ENCODE measurements at regions of chr17 and their contacts with region 1.

Region 1: DNA sequence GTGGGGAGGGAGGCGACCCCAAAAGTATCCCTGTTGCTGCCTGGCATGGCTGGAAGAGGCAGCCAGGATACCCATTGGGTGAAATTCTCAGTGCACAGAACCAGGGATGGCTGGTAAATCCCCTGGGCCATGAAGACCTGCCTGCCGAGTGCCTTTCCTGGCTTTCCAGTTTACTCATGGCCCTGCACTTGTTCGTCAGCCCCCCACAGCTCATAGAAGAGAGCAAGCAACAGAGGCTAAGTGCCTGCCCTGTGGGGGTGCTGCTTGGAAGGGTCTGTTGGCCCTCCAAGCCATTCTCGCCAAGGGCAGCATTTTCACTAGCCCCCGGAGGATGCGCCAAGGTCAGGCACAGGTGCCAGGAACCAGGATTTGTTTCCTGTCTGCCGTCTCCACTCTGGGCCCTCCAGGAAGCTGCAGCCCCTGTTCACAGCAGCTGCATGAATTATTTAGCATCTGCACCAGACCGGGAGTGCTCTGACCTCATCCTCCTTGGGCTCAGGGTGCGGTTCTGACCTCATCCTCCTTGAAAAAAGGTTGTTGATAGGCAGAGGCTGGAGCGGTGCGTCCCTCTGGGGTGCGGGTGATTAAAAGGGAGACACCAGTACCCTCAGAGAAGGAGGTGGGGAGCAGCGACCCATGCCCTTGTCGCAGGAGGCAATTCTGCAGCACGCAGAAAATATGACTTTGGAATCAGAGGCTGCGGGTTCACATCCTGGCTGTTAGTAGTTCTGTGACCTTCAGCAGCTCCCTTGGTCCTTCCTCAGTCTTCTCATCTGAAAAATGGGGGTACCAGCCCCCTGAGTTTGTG is 14.2 kb upstream of the CD300A start:
- DNase-seq: no peak
- H3K4me3 ChIP-seq: no peak overlapping the region
- H3K27ac ChIP-seq: peak overlapping the region in 3 of 4 donors; percentile 81 to 83 (median 83)
- H3K4me1 ChIP-seq: peaks cover 15 to 36% (median 29%) of the 10 kb centered on the region in 4 donors
- H3K27me3 ChIP-seq: no peaks in the 10 kb centered on the region
- CTCF ChIP-seq: no peak
- EP300 ChIP-seq: no peak
- POLR2A ChIP-seq: no peak

Region 2: DNA sequence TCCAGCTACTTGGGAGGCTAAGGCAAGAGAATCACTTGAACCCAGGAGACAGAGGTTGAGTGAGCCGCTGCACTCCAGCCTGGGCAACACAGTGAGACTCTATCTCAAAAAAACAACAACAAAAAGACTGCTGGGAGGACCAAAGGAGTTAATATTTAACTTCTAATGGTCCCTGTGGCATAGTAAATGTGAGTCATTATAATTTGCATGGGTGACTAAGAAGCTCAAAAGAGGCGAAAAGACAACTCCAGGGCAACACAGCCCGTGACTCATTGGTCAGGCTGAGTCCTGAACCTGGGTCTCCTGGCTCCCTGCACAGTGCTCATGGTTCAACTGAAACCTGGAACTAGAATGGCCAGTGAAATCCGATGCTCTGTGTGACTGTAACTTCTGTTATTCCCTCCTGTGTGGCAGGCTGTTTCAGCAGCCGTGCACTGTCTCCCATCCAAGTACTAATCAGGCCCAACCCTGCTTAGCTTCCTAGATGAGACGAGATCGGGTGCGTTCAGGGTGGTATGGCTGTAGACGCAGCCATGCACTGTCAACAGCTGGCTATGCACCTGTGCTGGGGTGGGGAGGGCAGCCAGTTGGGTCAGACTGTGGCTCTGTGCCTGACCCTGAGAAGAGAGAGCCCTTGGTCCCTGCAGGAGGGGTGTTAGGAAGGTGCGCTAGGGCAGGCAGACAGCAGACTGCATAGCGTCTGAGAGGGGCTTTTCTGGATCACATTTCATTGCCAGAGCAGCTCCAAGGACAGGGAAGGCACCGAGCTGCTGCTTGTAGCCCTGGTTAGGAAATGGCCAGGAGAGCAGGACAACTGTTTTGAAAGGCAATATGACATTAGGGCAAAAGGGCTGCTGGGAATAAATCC is 34.8 kb before region 1 on chr17:
- in situ Hi-C with region 1: no loop called
- intact Hi-C with region 1: loop called (anchors 1 kb)
- DNase-seq: peak; percentile 55
- H3K4me3 ChIP-seq: no peak overlapping the region
- H3K27ac ChIP-seq: peak overlapping the region; percentile 48 to 84 (median 78)
- H3K4me1 ChIP-seq: peaks cover 0 to 38% (median 31%) of the 10 kb centered on the region in 4 donors
- H3K27me3 ChIP-seq: no peaks in the 10 kb centered on the region
- CTCF ChIP-seq: no peak
- EP300 ChIP-seq: no peak
- POLR2A ChIP-seq: no peak

Region 3: GRCh38 chr17:74427763-74428153 is 24.5 kb before region 1 on chr17:
- in situ Hi-C with region 1: no loop called
- intact Hi-C with region 1: no loop called
- DNase-seq: no peak
- H3K4me3 ChIP-seq: no peak overlapping the region
- H3K27ac ChIP-seq: peak overlapping the region; percentile 84 to 96 (median 92)
- H3K4me1 ChIP-seq: peaks cover 18 to 53% (median 43%) of the 10 kb centered on the region in 4 donors
- H3K27me3 ChIP-seq: no peaks in the 10 kb centered on the region
- CTCF ChIP-seq: no peak
- EP300 ChIP-seq: no peak
- POLR2A ChIP-seq: no peak

Region 4: GRCh38 chr17:74521701-74522201 is 69.5 kb after region 1 on chr17:
- in situ Hi-C with region 1: no loop called
- intact Hi-C with region 1: no loop called
- DNase-seq: no peak
- H3K4me3 ChIP-seq: no peak overlapping the region
- H3K27ac ChIP-seq: peak overlapping the region; percentile 38 to 67 (median 40)
- H3K4me1 ChIP-seq: no peaks in the 10 kb centered on the region
- H3K27me3 ChIP-seq: no peaks in the 10 kb centered on the region
- CTCF ChIP-seq: no peak
- EP300 ChIP-seq: no peak
- POLR2A ChIP-seq: no peak

Region 5: DNA sequence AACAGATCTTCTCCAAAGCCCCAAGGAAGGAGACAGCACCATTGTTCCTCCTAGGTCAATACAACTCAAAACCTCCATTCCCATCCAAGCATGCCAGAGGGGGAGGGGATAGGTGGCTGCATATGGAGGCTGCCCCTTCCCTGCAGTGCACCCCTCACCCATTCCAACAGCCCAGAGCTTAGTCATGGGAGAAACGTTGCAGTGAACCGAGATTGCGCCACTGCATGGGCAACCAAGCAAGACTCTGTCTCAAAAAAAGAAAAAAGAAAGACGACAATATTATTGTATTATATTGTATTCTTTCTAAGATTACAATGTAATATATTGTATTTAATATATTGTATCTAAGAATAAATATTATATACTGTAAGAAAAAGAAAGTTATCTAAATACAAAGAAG is 207.7 kb after region 1 on chr17:
- in situ Hi-C with region 1: no loop called
- intact Hi-C with region 1: no loop called
- DNase-seq: no peak
- H3K4me3 ChIP-seq: no peak overlapping the region
- H3K27ac ChIP-seq: no peak overlapping the region
- H3K4me1 ChIP-seq: peaks cover 0 to 8% (median 0%) of the 10 kb centered on the region in 4 donors
- H3K27me3 ChIP-seq: peaks cover 52% of the 10 kb centered on the region
- CTCF ChIP-seq: no peak
- EP300 ChIP-seq: no peak
- POLR2A ChIP-seq: no peak

Measured in transverse colon (tissue), 4 donors.